ENCODE measurements at regions of chr15 and their contacts with region 1.

Region 1: DNA sequence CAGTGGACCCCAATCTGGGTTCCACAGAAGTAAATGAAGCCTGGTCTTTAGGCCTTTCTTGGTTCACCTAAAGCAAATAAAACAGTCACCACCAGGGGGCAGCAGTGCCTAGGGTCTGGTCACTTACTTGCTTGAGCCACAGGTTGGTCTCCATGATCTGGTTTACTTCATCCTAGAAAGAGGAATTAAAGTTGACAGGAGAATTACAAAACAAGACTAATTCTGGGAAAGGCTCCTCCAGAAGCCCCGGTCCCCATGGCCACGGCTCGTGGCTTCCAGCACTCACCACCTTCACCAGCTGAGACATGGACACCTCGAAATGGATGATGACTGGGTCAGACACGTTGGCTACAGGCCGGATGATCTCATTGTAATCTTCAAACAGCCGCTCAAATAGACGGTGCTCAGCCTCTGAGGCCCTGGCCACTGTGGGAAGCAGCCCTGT is 2.3 kb downstream of the CHRNA3 start:
- DNase-seq: peak; percentile 90 to 96
- H3K4me3 ChIP-seq: no peak overlapping the region
- CTCF ChIP-seq: no peak
- POLR2A ChIP-seq: no peak

Region 2: DNA sequence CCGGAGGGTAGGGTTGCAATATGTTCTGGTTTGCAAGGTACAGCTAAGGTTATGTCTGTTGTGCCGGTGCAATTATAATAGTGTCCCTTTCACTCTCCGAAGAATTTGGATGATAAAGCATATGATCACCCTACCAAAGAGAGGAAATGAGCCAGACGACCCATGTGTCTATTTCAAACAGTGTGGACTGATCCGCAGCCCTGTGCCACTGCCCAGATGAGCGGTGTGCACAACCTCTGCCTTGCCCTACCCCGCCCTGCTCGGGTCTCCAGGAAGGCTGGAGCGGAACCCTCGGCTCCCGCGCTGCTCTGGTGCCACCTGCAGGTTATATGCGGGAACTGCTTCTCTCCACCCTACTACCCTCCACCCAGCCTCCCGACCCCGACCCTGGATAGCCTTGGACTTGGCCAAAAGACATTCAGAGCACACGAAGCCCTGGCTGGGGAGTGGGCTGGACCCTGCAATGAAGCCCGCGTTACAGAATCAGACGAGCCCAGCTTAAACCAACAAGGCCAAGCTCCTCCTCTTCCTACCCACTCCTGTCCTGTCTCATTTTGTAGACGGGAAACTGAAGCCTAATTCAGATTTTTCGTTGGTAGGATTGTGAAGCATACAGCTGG is 90.9 kb after region 1 on chr15:
- intact Hi-C with region 1: loop called (anchors 5 kb)
- DNase-seq: peak; percentile 34 to 92
- H3K4me3 ChIP-seq: no peak overlapping the region
- CTCF ChIP-seq: peak in 1 of 3 donors; percentile 43
- POLR2A ChIP-seq: no peak

Measured in lower leg skin (tissue), 4 donors.